ENCODE measurements at regions of chr6 and their contacts with region 1.

Region 1: DNA sequence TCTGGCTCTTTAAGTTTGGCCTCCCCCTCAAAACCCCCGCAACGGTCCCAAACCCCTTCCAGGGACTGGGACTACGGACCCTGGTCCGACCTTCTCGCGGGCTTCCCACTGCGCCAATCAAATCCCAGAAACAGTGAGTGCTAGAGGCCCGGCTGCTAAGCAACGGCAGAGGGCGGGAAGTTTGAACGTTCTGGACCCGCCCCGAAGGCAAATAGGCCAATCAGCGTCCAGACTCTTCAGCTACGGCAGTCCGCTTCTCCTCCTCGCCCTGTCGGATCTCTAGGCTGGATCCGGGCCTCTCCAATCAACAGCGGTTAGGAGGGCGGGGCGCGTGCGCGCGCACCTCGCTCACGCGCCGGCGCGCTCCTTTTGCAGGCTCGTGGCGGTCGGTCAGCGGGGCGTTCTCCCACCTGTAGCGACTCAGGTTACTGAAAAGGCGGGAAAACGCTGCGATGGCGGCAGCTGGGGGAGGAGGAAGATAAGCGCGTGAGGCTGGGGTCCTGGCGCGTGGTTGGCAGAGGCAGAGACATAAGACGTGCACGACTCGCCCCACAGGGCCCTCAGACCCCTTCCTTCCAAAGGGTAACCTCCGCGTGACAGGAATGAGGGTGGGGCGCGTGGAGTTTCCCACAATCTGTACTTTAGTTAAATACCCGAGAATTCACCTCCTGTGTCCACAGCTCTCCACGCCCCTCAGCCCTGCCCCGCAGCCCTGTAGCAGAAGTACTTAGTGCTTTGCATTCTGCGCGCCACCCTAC is at the start of gene MSH5:
- DNase-seq: peak; percentile 99
- H3K4me3 Mint-ChIP-seq: peak within 1 kb of the TSS; percentile 98
- H3K27ac Mint-ChIP-seq: peak within 1 kb of the TSS; percentile 93
- H3K4me1 Mint-ChIP-seq: peaks cover 54% of the 10 kb centered on the region
- H3K27me3 Mint-ChIP-seq: no peaks in the 10 kb centered on the region
- total RNA-seq, gene MSH5: 87.8 and 99.6 TPM in 2 replicates

Region 2: DNA sequence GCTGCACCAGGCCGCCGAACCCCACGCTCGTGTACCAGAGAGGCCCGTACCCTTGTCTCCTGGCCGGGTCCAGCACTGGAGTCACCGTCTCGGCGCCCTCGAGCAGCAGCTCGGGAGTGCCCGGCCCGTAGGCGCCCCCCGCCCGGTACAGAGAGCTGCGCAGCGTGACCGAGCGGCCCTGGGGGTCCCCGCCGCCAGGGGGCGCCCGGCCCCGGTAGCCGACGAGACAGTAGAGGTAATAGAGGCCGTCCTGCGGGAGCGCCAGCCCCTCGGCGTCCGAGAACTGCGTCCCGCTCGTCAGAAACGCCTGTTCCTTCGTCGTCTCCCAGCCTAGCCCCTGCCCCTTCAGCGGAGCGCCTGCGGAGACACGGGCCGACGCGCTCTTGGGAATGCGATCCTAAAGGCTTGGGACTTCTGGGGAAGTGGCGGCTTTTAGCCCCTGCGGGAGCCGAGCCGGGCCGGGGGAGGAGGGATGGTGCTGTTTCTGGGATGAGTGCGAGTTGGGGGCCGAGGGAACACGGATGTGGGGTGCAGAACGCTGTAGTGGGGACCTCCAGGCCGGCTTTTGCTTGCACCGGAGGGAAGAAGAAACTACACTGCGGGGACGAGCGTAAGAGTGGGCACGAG is 158.9 kb before region 1 on chr6:
- intact Hi-C with region 1: loop called (anchors 5 kb)
- DNase-seq: peak; percentile 96
- H3K4me3 Mint-ChIP-seq: peak overlapping the region; percentile 94
- H3K27ac Mint-ChIP-seq: peak overlapping the region; percentile 91
- H3K4me1 Mint-ChIP-seq: peaks cover 62% of the 10 kb centered on the region
- H3K27me3 Mint-ChIP-seq: no peaks in the 10 kb centered on the region

Region 3: DNA sequence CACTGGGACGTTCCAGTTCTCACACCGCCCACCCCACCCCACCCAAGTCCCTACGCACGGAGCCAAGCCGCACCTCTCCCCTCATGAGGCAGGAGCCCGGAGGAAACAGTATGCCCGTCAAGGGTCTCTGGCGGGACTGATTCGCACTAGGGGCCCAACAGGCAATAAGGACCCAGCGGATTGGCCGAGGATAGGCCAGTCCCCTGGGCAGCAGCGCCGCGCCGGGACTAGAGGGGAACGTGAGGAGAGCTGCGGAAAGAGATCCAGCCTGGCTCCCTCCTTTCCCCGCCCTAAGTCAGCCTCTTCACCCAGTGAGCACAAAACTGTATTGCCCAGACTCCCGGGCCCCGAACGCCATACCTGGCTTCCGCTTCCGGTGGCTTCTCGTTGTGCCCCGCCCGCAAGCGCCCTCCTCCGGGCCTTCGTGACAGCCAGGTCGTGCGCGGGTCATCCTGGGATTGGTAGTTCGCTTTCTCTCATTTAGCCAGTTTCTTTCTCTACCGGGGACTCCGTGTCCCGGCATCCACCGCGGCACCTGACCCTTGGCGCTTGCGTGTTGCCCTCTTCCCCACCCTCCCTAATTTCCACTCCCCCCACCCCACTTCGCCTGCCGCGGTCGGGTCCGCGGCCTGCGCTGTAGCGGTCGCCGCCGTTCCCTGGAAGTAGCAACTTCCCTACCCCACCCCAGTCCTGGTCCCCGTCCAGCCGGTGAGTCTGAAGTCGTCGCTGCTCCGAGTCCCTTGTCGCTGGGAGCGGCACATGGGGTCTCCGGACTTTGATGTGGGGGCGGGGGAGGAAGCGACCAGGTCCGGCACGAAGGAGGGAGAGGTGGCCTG is 74.1 kb before region 1 on chr6 and contains the start of gene CSNK2B:
- intact Hi-C with region 1: loop called (anchors 2 kb)
- DNase-seq: peak; percentile 99
- H3K4me3 Mint-ChIP-seq: peak within 1 kb of the TSS; percentile 96
- H3K27ac Mint-ChIP-seq: peak within 1 kb of the TSS; percentile 96
- H3K4me1 Mint-ChIP-seq: peaks cover 58% of the 10 kb centered on the region
- H3K27me3 Mint-ChIP-seq: no peaks in the 10 kb centered on the region
- total RNA-seq, gene CSNK2B: 288 and 302 TPM in 2 replicates

Region 4: GRCh38 chr6:31702819-31703522 is 36.8 kb before region 1 on chr6 and contains the start of gene ABHD16A:
- intact Hi-C with region 1: loop called (anchors 1 kb)
- DNase-seq: peak; percentile 99
- H3K4me3 Mint-ChIP-seq: peak within 1 kb of the TSS; percentile 98
- H3K27ac Mint-ChIP-seq: peak within 1 kb of the TSS; percentile 99
- H3K4me1 Mint-ChIP-seq: peaks cover 24% of the 10 kb centered on the region
- H3K27me3 Mint-ChIP-seq: no peaks in the 10 kb centered on the region
- total RNA-seq, gene ABHD16A: 43.1 and 44.7 TPM in 2 replicates

Region 5: GRCh38 chr6:31769684-31770371 is 30.0 kb after region 1 on chr6:
- intact Hi-C with region 1: loop called (anchors 1 kb)
- DNase-seq: peak; percentile 96
- H3K4me3 Mint-ChIP-seq: no peak overlapping the region
- H3K27ac Mint-ChIP-seq: peak overlapping the region; percentile 46
- H3K4me1 Mint-ChIP-seq: peaks cover 24% of the 10 kb centered on the region
- H3K27me3 Mint-ChIP-seq: no peaks in the 10 kb centered on the region

Region 6: GRCh38 chr6:31834434-31835198 is 94.8 kb after region 1 on chr6:
- intact Hi-C with region 1: loop called (anchors 2 kb)
- DNase-seq: peak; percentile 93
- H3K4me3 Mint-ChIP-seq: peak overlapping the region; percentile 97
- H3K27ac Mint-ChIP-seq: peak overlapping the region; percentile 96
- H3K4me1 Mint-ChIP-seq: peaks cover 34% of the 10 kb centered on the region
- H3K27me3 Mint-ChIP-seq: no peaks in the 10 kb centered on the region